Activated CD4-positive, alpha-beta T cell treated with anti-CD3 and anti-CD28 coated beads, Interleukin-2, amount 10 ng/mL, durations not matched to agents 7 days and 5 days (primary cell): ENCODE measurements at regions of chr11 and their contacts with region 1.

Region 1: GRCh38 chr11:19060629-19061028 is at the start of gene MRGPRX2:
- DNase-seq: no peak
- H3K4me3 Mint-ChIP-seq: no peak within 1 kb of the TSS
- H3K27ac Mint-ChIP-seq: no peak within 1 kb of the TSS
- H3K4me1 Mint-ChIP-seq: peaks cover 18% of the 10 kb centered on the region
- H3K27me3 Mint-ChIP-seq: peaks cover 21% of the 10 kb centered on the region
- total RNA-seq, gene MRGPRX2: not detected

Region 2: GRCh38 chr11:19071255-19071654 is 10.6 kb after region 1 on chr11:
- CTCF ChIA-PET with region 1: interaction called, 10 read pairs
- POLR2A ChIA-PET with region 1: no interaction called
- DNase-seq: peak; percentile 65
- H3K4me3 Mint-ChIP-seq: peak overlapping the region; percentile 1
- H3K27ac Mint-ChIP-seq: no peak overlapping the region
- H3K4me1 Mint-ChIP-seq: peaks cover 4% of the 10 kb centered on the region
- H3K27me3 Mint-ChIP-seq: peaks cover 6% of the 10 kb centered on the region